Endothelial cell of umbilical vein (primary cell): ENCODE measurements at regions of chr2 and their contacts with region 1.

Region 1: GRCh38 chr2:58680755-58681310 is 439.7 kb upstream of the FANCL start:
- DNase-seq: peak; percentile 8
- H3K4me3 ChIP-seq: no peak overlapping the region
- H3K27ac ChIP-seq: no peak overlapping the region
- H3K4me1 ChIP-seq: no peaks in the 10 kb centered on the region
- H3K27me3 ChIP-seq: no peaks in the 10 kb centered on the region
- CTCF ChIP-seq: no peak
- POLR2A ChIP-seq: no peak

Region 2: DNA sequence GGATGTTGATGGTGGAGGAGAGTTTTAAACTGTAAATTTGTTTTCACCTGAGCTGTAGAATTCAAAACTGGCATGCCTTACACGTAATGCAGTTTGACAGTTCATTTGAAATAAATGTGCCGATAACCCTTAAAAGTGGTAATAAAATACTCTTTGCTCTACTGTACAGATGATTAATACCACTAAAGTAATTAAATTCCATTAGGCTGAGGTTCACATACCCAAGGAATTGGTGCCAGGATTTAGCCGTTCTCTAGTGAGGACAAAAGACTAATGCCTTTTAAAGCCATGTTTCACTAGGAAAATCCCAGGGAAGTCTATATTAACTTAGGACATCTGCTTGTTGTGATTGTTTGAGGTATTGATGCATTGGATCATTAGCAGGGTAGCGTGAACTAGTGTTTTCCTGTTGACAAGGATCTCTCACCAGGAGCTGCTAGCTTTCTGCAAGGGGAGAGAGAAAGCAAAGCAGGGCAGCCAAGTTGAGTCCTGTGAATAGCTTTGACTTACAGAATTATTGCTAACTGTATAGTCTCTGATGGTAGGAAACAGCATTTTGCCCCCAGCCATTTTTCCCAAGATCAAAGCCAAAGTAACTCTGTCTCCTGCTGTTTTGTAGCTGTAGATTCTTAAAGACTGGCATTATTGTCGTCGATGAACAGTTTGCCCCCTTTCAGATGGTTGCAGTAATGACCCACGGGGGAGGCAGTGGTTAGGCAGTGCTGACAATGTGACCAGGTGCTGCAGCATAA is 158.9 kb before region 1 on chr2:
- CTCF ChIA-PET with region 1: no interaction called
- POLR2A ChIA-PET with region 1: no interaction called
- dilution Hi-C with region 1: no loop called
- intact Hi-C with region 1: no loop called
- DNase-seq: no peak
- H3K4me3 ChIP-seq: no peak overlapping the region
- H3K27ac ChIP-seq: no peak overlapping the region
- H3K4me1 ChIP-seq: no peaks in the 10 kb centered on the region
- H3K27me3 ChIP-seq: peaks cover 4 to 7% of the 10 kb centered on the region in 2 experiments
- CTCF ChIP-seq: no peak
- POLR2A ChIP-seq: no peak

Region 3: GRCh38 chr2:58571181-58571852 is 109.5 kb before region 1 on chr2:
- CTCF ChIA-PET with region 1: interaction called, 305 read pairs
- POLR2A ChIA-PET with region 1: interaction called, 3 read pairs
- dilution Hi-C with region 1: no loop called
- intact Hi-C with region 1: loop called (anchors 1 kb)
- DNase-seq: peak; percentile 84
- H3K4me3 ChIP-seq: no peak overlapping the region
- H3K27ac ChIP-seq: no peak overlapping the region
- H3K4me1 ChIP-seq: peaks cover 2% of the 10 kb centered on the region
- H3K27me3 ChIP-seq: no peaks in the 10 kb centered on the region
- CTCF ChIP-seq: peak; percentile 69 to 81
- POLR2A ChIP-seq: no peak

Region 4: GRCh38 chr2:58594175-58594574 is 86.7 kb before region 1 on chr2:
- CTCF ChIA-PET with region 1: interaction called, 13 read pairs
- POLR2A ChIA-PET with region 1: no interaction called
- dilution Hi-C with region 1: no loop called
- intact Hi-C with region 1: no loop called
- DNase-seq: no peak
- H3K4me3 ChIP-seq: no peak overlapping the region
- H3K27ac ChIP-seq: no peak overlapping the region
- H3K4me1 ChIP-seq: no peaks in the 10 kb centered on the region
- H3K27me3 ChIP-seq: no peaks in the 10 kb centered on the region
- CTCF ChIP-seq: peak; percentile 29 to 31
- POLR2A ChIP-seq: no peak

Region 5: DNA sequence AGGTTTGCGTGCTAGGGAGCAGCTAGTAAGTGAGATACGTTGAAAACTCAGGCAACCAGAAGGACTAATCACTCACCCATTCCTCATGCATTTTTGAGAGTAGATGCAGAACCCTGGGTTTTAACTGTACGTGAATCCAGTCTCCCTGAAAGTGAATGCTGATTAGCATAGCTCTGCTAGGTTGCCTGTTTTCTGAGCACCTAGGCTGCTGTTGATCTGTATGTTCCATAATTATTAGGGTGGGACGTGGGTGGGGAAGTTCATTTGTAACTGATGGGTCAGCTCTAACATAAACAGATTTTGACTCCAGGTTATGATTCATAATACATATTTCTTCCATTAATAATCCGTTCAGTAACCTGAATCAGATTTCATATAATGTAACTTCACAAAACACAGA is 60.7 kb before region 1 on chr2:
- CTCF ChIA-PET with region 1: interaction called, 16 read pairs
- POLR2A ChIA-PET with region 1: no interaction called
- dilution Hi-C with region 1: no loop called
- intact Hi-C with region 1: no loop called
- DNase-seq: peak; percentile 63
- H3K4me3 ChIP-seq: peak overlapping the region in 1 of 3 experiments; percentile 7
- H3K27ac ChIP-seq: peak overlapping the region; percentile 76
- H3K4me1 ChIP-seq: peaks cover 33% of the 10 kb centered on the region
- H3K27me3 ChIP-seq: no peaks in the 10 kb centered on the region
- CTCF ChIP-seq: no peak
- POLR2A ChIP-seq: peak; percentile 37

Region 6: GRCh38 chr2:58664523-58665151 is 16.2 kb before region 1 on chr2:
- CTCF ChIA-PET with region 1: interaction called, 27 read pairs
- POLR2A ChIA-PET with region 1: no interaction called
- dilution Hi-C with region 1: no loop called
- intact Hi-C with region 1: no loop called
- DNase-seq: peak; percentile 24
- H3K4me3 ChIP-seq: no peak overlapping the region
- H3K27ac ChIP-seq: no peak overlapping the region
- H3K4me1 ChIP-seq: peaks cover 13% of the 10 kb centered on the region
- H3K27me3 ChIP-seq: no peaks in the 10 kb centered on the region
- CTCF ChIP-seq: no peak
- POLR2A ChIP-seq: no peak

Region 7: DNA sequence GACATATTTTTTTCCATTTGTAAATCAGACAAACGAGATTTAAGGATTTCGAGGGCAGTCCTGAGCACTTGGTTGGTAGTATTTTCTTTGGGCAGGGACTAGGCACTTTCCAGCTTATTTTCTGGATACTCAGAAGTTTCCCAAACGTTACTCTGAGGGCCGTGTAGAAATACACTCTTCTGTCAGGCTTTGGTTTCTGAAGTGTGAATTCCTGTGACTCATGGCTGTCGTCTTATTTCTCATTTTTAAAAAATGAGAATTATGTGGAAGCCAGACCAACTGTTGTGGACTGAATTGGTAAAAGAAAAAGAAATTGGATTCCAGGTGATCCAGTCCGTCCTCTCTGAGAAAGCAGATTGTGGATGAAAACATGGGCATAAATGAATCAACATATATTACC is 218.9 kb after region 1 on chr2:
- CTCF ChIA-PET with region 1: no interaction called
- POLR2A ChIA-PET with region 1: no interaction called
- dilution Hi-C with region 1: no loop called
- intact Hi-C with region 1: no loop called
- DNase-seq: no peak
- H3K4me3 ChIP-seq: no peak overlapping the region
- H3K27ac ChIP-seq: no peak overlapping the region
- H3K4me1 ChIP-seq: no peaks in the 10 kb centered on the region
- H3K27me3 ChIP-seq: no peaks in the 10 kb centered on the region
- CTCF ChIP-seq: no peak
- POLR2A ChIP-seq: no peak

Region 8: GRCh38 chr2:58967736-58968135 is 286.9 kb after region 1 on chr2:
- CTCF ChIA-PET with region 1: no interaction called
- POLR2A ChIA-PET with region 1: no interaction called
- dilution Hi-C with region 1: no loop called
- intact Hi-C with region 1: no loop called
- DNase-seq: no peak
- H3K4me3 ChIP-seq: no peak overlapping the region
- H3K27ac ChIP-seq: no peak overlapping the region
- H3K4me1 ChIP-seq: no peaks in the 10 kb centered on the region
- H3K27me3 ChIP-seq: no peaks in the 10 kb centered on the region
- CTCF ChIP-seq: no peak
- POLR2A ChIP-seq: no peak